ENCODE measurements at regions of chr9 and their contacts with region 1.

Region 1: DNA sequence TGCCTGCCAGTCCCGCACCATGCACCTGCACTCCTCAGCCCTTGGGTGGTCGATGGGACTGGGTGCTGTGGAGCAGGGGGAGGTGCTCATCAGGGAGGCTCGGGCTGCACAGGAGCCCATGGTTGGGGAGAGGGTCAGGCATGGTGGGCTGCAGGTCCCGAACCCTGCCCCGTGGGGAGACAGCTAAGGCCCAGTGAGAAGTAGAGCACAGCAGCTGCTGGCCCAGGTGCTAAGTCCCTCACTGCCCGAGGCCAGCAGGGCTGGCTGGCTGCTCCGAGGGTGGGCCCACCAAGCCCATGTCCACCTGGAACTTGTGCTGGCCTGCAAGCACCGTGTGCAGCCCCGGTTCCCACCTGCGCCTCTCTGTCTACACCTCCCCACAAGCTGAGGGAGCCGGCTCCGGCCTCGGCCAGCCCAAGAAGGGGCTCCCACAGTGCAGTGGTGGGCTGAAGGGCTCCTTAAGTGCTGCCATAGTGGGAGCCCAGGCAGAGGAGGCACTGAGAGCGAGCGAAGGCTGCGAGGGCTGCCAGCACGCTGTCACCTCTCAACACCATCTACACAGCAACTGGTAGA is 88.5 kb upstream of the ELAVL2 start:
- DNase-seq: no peak
- ATAC-seq: no peak
- H3K4me3 ChIP-seq: no peak overlapping the region
- H3K4me3 Mint-ChIP-seq: no peak overlapping the region
- H3K27ac ChIP-seq: no peak overlapping the region
- H3K27ac Mint-ChIP-seq: no peak overlapping the region
- H3K4me1 ChIP-seq: no peaks in the 10 kb centered on the region
- H3K4me1 Mint-ChIP-seq: no peaks in the 10 kb centered on the region
- H3K27me3 ChIP-seq: peaks cover 0 to 3% of the 10 kb centered on the region in 2 experiments
- H3K27me3 Mint-ChIP-seq: no peaks in the 10 kb centered on the region

Region 2: DNA sequence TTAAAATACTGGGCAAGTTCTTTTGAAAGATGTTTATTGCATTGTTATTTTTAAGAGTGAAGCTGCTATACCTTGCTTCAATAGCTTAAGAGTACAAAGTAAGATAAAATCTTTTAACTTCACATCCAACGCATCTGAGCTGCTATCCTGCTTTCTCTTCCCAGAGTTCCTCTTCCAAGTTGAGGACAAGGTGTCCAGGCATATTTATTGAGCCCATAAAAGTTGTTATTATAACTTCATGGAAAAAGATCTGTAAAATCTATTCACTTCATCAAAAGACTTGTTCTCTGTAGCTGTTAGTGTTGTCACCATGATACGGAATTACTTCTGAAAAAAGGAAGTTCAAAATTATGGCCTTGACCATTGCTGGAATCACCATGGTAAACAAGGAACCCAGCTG is 217.7 kb after region 1 on chr9:
- CTCF ChIA-PET with region 1: no interaction called
- POLR2A ChIA-PET with region 1: interaction called in 1 of 2 experiments, 13 read pairs
- DNase-seq: no peak
- ATAC-seq: no peak
- H3K4me3 ChIP-seq: no peak overlapping the region
- H3K4me3 Mint-ChIP-seq: no peak overlapping the region
- H3K27ac ChIP-seq: no peak overlapping the region
- H3K27ac Mint-ChIP-seq: no peak overlapping the region
- H3K4me1 ChIP-seq: no peaks in the 10 kb centered on the region
- H3K4me1 Mint-ChIP-seq: no peaks in the 10 kb centered on the region
- H3K27me3 ChIP-seq: no peaks in the 10 kb centered on the region
- H3K27me3 Mint-ChIP-seq: no peaks in the 10 kb centered on the region

Measured in T-cell (primary cell).